Natural killer cell (primary cell): ENCODE measurements at regions of chr6 and their contacts with region 1.

Region 1: GRCh38 chr6:159134701-159135364 is 34.4 kb upstream of the FNDC1 start:
- DNase-seq: peak; percentile 68 to 90
- ATAC-seq: peak; percentile 89 to 100 (median 98)
- H3K4me3 ChIP-seq: no peak overlapping the region
- H3K4me3 Mint-ChIP-seq: no peak overlapping the region
- H3K27ac ChIP-seq: no peak overlapping the region
- H3K27ac Mint-ChIP-seq: no peak overlapping the region
- H3K4me1 ChIP-seq: peaks cover 4% of the 10 kb centered on the region
- H3K4me1 Mint-ChIP-seq: peaks cover 6 to 12% of the 10 kb centered on the region in 2 donors
- H3K27me3 ChIP-seq: no peaks in the 10 kb centered on the region
- H3K27me3 Mint-ChIP-seq: peaks cover 7 to 14% of the 10 kb centered on the region in 2 donors
- CTCF ChIP-seq: peak; percentile 99

Region 2: GRCh38 chr6:158704181-158704822 is 430.5 kb before region 1 on chr6:
- intact Hi-C with region 1: loop called (anchors 5 kb)
- DNase-seq: peak; percentile 83 to 88
- ATAC-seq: peak; percentile 92 to 97 (median 96)
- H3K4me3 ChIP-seq: peak overlapping the region; percentile 24
- H3K4me3 Mint-ChIP-seq: peak overlapping the region; percentile 90
- H3K27ac ChIP-seq: peak overlapping the region; percentile 24
- H3K27ac Mint-ChIP-seq: peak overlapping the region; percentile 29 to 94
- H3K4me1 ChIP-seq: peaks cover 39% of the 10 kb centered on the region
- H3K4me1 Mint-ChIP-seq: peaks cover 15 to 36% of the 10 kb centered on the region in 2 donors
- H3K27me3 ChIP-seq: no peaks in the 10 kb centered on the region
- H3K27me3 Mint-ChIP-seq: no peaks in the 10 kb centered on the region
- CTCF ChIP-seq: peak; percentile 98

Region 3: DNA sequence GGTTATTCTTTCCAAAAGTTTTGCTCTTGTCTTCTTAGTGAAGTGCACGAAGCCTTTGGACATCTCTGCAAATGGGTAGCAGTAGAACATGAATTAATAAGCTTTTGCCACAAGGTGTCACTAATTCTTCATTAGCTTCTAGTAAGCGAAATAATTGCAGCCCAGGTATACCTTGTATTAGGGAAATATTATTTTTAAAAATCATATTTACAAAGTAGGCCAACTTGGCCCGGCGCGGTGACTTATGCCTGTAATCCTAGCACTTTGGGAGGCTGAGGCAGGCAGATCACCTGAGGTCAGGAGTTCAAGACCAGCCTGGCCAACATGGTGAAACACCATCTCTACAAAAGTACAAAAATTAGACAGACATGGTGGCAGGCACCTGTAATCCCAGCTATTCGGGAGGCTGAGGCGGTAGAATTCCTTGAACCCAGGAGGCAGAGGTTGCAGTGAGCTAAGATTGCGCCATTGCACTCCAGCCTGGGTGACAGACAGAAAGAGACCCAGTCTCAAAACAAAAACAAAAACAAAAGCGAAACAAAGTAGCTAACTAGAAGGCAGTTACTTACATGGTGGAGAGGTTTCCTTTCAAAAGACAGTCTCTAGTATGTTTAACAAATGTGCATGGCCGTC is 126.1 kb before region 1 on chr6:
- intact Hi-C with region 1: loop called (anchors 1 kb)
- DNase-seq: peak in 1 of 2 donors; percentile 79
- ATAC-seq: peak; percentile 84 to 88 (median 87)
- H3K4me3 ChIP-seq: peak overlapping the region; percentile 18
- H3K4me3 Mint-ChIP-seq: peak overlapping the region; percentile 62
- H3K27ac ChIP-seq: peak overlapping the region; percentile 30
- H3K27ac Mint-ChIP-seq: peak overlapping the region; percentile 76 to 77
- H3K4me1 ChIP-seq: peaks cover 19% of the 10 kb centered on the region
- H3K4me1 Mint-ChIP-seq: peaks cover 10 to 30% of the 10 kb centered on the region in 2 donors
- H3K27me3 ChIP-seq: no peaks in the 10 kb centered on the region
- H3K27me3 Mint-ChIP-seq: no peaks in the 10 kb centered on the region
- CTCF ChIP-seq: peak; percentile 74